Sigmoid colon (tissue), 7 donors: ENCODE measurements at regions of chr11 and their contacts with region 1.

Region 1: GRCh38 chr11:65779851-65780577 is 762 bp downstream of the AP5B1 start:
- DNase-seq: peak; percentile 88
- H3K4me3 ChIP-seq: peak overlapping the region; percentile 69 to 99 (median 79)
- H3K27ac ChIP-seq: peak overlapping the region; percentile 73 to 85 (median 78)
- H3K4me1 ChIP-seq: peaks cover 0 to 29% (median 21%) of the 10 kb centered on the region in 4 donors
- H3K27me3 ChIP-seq: peaks cover 0 to 7% (median 0%) of the 10 kb centered on the region in 3 donors
- CTCF ChIP-seq: peak; percentile 92 to 97 (median 96)
- EP300 ChIP-seq: no peak
- POLR2A ChIP-seq: peak in 1 of 2 donors; percentile 16

Region 2: DNA sequence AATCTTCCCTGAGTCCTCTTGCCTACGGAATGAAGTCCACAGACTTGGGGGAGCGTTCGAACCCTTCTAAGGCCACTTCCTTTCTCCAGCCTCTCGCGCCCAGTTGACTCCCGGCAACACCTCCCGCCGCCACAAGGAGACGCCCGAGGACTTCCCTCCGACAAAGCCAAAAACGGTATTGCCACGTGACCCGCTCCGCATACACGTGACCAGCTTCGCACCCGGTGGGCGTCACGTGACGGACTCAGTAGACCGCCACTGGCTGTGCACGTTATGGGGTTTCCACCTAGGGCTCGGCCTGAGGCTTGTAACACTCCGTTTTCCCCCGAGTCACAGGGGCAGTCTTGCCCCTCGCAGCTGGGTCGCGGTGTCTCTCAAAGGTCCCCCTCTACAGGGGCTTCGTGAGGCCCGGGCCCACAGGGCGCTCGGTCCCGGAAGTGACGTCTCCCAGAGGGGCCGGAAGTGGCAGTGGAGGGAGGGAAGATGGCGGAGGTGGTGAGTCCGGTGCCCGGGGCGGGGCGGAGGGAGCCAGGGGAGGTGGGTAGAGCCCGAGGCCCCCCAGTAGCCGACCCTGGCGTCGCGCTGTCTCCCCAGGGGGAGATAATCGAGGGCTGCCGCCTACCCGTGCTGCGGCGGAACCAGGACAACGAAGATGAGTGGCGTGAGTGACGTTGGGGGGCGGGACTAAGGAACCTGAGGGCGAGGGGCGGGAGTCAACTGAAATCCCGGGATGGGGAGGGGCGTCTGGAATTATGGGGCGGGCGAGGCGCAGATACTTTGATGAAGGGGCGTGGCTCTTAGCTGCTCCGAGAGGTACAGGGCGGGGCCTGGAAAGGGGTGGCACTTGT is 68.0 kb before region 1 on chr11 and contains the start of gene KAT5:
- intact Hi-C with region 1: loop called (anchors 2 kb)
- DNase-seq: peak; percentile 100
- H3K4me3 ChIP-seq: peak within 1 kb of the TSS; percentile 59 to 83 (median 70)
- H3K27ac ChIP-seq: peak within 1 kb of the TSS; percentile 92 to 100 (median 98)
- H3K4me1 ChIP-seq: peaks cover 0 to 22% (median 19%) of the 10 kb centered on the region in 4 donors
- H3K27me3 ChIP-seq: no peaks in the 10 kb centered on the region
- CTCF ChIP-seq: peak; percentile 94 to 100 (median 100)
- EP300 ChIP-seq: no peak
- POLR2A ChIP-seq: peak; percentile 88 to 91
- total RNA-seq, gene KAT5: 58.4 to 92.7 (median 74.7) TPM

Region 3: GRCh38 chr11:65817835-65818742 is 38.1 kb after region 1 on chr11:
- intact Hi-C with region 1: loop called (anchors 1 kb)
- DNase-seq: peak; percentile 95
- H3K4me3 ChIP-seq: peak overlapping the region; percentile 29 to 65 (median 60)
- H3K27ac ChIP-seq: peak overlapping the region; percentile 64 to 74 (median 72)
- H3K4me1 ChIP-seq: peaks cover 0 to 12% (median 8%) of the 10 kb centered on the region in 4 donors
- H3K27me3 ChIP-seq: no peaks in the 10 kb centered on the region
- CTCF ChIP-seq: peak; percentile 85 to 100 (median 94)
- EP300 ChIP-seq: no peak
- POLR2A ChIP-seq: no peak

Region 4: DNA sequence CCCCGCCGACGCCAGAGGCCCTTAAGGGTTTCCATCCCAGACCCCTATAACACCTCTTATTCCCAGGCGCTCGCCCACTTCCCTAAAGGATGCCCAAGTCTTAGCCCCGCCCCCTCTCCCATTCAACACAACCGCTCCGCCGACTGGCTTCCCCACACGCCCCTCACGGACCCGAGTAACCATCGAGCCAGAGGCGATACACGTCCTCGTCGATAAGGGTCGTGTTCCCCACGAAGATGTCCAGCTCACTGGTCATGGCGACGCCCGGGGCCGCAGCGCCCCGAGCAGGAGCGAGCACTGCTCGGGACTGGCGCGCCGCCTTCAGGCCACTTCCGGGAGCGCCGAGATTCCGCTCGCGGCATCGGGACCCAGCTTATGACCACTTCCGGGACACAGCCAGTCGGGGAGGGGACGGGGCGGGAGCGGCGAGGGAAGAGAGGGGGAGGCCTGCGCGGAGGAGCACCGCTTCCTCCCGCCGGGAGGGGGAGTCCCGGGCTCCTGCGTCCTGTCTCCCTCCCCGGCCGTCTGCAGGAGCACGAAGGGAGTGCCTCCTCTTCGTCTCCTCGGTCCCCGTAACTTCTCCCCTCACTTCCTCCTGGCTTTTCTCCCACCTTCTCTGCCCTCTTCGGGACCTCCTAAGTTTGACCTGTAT is 108.3 kb after region 1 on chr11 and contains the start of gene FIBP:
- intact Hi-C with region 1: no loop called
- DNase-seq: peak; percentile 99
- H3K4me3 ChIP-seq: peak within 1 kb of the TSS; percentile 53 to 75 (median 62)
- H3K27ac ChIP-seq: peak within 1 kb of the TSS; percentile 95 to 98 (median 97)
- H3K4me1 ChIP-seq: peaks cover 0 to 71% (median 62%) of the 10 kb centered on the region in 4 donors
- H3K27me3 ChIP-seq: no peaks in the 10 kb centered on the region
- CTCF ChIP-seq: peak; percentile 85 to 99 (median 91)
- EP300 ChIP-seq: no peak
- POLR2A ChIP-seq: peak; percentile 90 to 92
- total RNA-seq, gene FIBP: 37.5 to 60.7 (median 48.6) TPM

Region 5: GRCh38 chr11:65988791-65989592 is 209.0 kb after region 1 on chr11:
- intact Hi-C with region 1: loop called (anchors 5 kb)
- DNase-seq: peak; percentile 94
- H3K4me3 ChIP-seq: no peak overlapping the region
- H3K27ac ChIP-seq: peak overlapping the region in 3 of 4 donors; percentile 25 to 38 (median 31)
- H3K4me1 ChIP-seq: no peaks in the 10 kb centered on the region
- H3K27me3 ChIP-seq: no peaks in the 10 kb centered on the region
- CTCF ChIP-seq: peak; percentile 87 to 98 (median 94)
- EP300 ChIP-seq: no peak
- POLR2A ChIP-seq: no peak